Mammary epithelial cell (primary cell): ENCODE measurements at regions of chr16 and their contacts with region 1.

Region 1: DNA sequence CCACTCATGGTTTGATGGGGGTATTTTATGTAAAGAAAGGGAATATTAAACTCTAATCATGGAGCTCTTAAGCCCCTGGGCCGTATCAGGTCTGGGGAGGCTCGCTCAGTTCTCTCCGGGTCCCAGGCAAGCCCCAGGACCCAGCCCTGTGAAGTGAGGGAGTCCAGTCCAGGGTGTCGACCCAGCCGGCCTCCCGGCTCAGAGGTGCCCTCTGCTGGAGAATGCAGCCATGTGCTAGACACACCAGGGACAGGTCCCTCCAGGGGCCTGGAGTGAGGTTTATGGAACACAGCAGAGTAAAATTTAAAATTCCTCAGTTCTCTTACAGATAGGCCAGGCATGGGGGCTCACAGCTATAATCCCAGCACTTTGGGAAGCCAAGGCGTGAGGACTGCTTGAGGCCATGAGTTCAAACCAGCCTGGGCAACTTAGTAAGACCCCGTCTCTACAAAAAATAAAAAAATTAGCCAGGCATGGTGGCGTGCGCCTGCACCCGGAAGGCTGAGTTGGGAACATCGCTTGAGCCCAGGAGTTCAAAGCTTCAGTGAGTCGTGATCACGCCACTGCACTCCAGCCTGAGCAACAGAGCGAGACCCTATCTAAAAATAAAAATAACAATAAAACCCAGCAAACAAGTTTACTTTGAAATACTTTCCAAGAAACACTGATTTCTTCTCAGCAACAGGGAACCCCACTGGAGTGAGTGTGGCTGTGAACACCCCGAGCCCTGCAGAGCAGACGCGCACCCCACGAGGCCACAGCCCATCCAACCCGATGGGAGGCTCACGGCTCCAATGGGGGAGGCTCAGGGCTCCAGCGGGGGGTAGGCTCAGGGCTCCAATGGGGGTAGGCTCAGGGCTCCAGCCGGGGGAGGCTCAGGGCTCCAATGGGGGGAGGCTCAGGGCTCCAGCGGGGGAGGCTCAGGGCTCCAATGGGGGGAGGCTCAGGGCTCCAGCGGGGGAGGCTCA is 72.2 kb downstream of the ZNF778 start:
- DNase-seq: peak; percentile 39
- H3K4me3 ChIP-seq: no peak overlapping the region
- H3K27ac ChIP-seq: no peak overlapping the region
- H3K4me1 ChIP-seq: no peaks in the 10 kb centered on the region
- H3K27me3 ChIP-seq: no peaks in the 10 kb centered on the region
- CTCF ChIP-seq: peak; percentile 80 to 84

Region 2: GRCh38 chr16:88941913-88942909 is 347.5 kb before region 1 on chr16:
- CTCF ChIA-PET with region 1: no interaction called
- dilution Hi-C with region 1: no loop called
- in situ Hi-C with region 1: no loop called
- intact Hi-C with region 1: loop called (anchors 2 kb)
- DNase-seq: no peak
- H3K4me3 ChIP-seq: no peak overlapping the region
- H3K27ac ChIP-seq: no peak overlapping the region
- H3K4me1 ChIP-seq: no peaks in the 10 kb centered on the region
- H3K27me3 ChIP-seq: peaks cover 42% of the 10 kb centered on the region
- CTCF ChIP-seq: peak; percentile 24 to 58

Region 3: GRCh38 chr16:89395141-89395874 is 105.6 kb after region 1 on chr16:
- CTCF ChIA-PET with region 1: no interaction called
- dilution Hi-C with region 1: no loop called
- in situ Hi-C with region 1: no loop called
- intact Hi-C with region 1: no loop called
- DNase-seq: peak; percentile 88
- H3K4me3 ChIP-seq: no peak overlapping the region
- H3K27ac ChIP-seq: peak overlapping the region; percentile 43
- H3K4me1 ChIP-seq: peaks cover 47% of the 10 kb centered on the region
- H3K27me3 ChIP-seq: no peaks in the 10 kb centered on the region
- CTCF ChIP-seq: no peak